ENCODE measurements at regions of chr16 and their contacts with region 1.

Region 1: DNA sequence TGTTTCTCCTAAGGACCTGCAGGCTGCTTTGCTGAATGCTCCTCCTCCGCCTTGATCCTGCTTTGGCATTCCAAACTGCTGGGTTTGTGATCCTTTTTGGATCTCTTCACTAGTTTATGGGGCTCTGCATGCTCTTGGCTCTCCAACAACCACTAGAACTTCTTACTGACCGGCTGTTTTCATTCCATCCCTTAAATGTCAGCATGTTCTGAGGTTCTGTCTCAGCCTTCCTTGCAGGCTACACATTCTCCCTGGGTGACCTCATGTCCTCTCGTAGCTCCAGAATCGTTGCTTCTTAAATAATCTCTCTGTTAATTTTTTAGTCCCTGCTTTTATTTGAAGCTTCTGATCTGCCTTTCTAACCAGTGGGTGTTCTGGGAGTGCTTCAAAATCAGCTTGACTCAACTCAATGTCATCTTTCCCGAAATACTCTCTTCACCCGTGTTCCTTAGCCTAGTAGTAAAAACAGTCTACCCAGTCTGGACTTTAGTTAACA is 119.0 kb upstream of the HS3ST2 start:
- DNase-seq: peak; percentile 29 to 56
- H3K4me3 ChIP-seq: no peak overlapping the region
- H3K27ac ChIP-seq: peak overlapping the region; percentile 61 to 73
- H3K4me1 ChIP-seq: no peaks in the 10 kb centered on the region
- H3K27me3 ChIP-seq: no peaks in the 10 kb centered on the region
- CTCF ChIP-seq: no peak
- POLR2A ChIP-seq: no peak

Region 2: DNA sequence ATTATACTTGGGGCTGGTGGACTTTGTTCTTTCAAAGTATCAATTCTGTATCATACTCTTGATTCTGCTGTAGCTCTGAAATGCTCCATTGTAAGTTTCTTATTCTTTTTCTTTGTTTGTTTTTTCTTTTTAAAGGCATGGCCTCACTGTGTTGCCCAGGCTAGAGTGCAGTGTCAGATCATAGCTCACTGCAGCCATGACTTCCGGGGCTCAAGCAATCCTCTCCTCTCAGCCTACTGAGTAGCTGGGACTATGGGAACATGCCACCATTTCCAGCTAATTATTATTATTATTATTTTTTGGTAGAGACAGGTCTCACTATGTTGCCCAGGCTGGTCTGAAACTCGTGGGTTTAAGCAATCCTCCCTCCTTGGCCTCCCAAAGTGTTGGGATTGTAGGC is 1134.5 kb before region 1 on chr16:
- intact Hi-C with region 1: loop called (anchors 5 kb)
- DNase-seq: no peak
- H3K4me3 ChIP-seq: no peak overlapping the region
- H3K27ac ChIP-seq: no peak overlapping the region
- H3K4me1 ChIP-seq: no peaks in the 10 kb centered on the region
- H3K27me3 ChIP-seq: no peaks in the 10 kb centered on the region
- CTCF ChIP-seq: no peak
- POLR2A ChIP-seq: no peak